AG04450 (cell line): ENCODE measurements at regions of chr22 and their contacts with region 1.

Region 1: DNA sequence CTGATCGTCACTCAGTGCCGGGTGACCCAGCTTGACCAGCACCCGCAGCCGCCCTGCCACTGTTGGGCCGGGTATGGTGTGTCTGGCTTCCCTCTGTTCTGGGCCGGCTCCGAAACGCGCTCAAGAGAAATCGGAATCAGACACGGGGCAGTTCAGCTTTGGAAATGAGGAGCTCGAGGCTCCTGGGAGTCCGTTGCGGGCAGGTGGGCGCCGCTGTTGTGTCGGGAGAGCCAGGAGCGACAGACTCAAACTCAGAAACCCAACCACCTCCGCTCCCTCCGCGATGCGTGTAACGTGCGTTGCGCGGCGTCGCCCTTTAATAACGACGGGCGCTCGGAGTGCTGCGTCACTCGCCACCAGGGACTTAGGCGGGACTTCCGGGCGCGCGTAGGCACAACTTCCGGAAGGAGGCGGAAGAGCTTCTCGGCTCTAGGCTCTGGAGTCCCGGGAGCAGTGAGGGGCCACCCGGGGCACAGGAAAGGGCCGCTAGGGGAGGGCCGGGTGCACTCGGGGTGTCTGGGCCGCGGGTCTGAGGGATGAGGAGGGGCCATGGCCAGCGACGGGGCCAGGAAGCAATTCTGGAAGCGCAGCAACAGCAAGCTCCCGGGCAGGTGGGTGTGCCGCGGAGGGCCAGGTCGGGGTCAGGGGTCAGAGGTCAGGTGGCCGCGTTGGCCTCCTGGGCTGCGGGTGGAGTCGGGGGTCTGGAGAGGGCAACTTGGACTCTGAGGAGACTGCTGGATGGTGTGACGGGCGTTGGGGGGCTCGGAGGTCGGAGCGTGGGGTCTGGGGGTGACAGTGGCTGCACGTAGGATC is at the start of gene TBC1D22A:
- DNase-seq: peak; percentile 80
- H3K4me3 ChIP-seq: peak within 1 kb of the TSS; percentile 100
- H3K27ac ChIP-seq: peak within 1 kb of the TSS; percentile 81
- H3K27me3 ChIP-seq: no peaks in the 10 kb centered on the region
- CTCF ChIP-seq: no peak
- polyA plus RNA-seq, gene TBC1D22A: 19.8 and 21.6 TPM in 2 replicates

Region 2: GRCh38 chr22:46693634-46694415 is 68.6 kb before region 1 on chr22:
- CTCF ChIA-PET with region 1: no interaction called
- POLR2A ChIA-PET with region 1: no interaction called
- DNase-seq: no peak
- H3K4me3 ChIP-seq: no peak overlapping the region
- H3K27ac ChIP-seq: no peak overlapping the region
- H3K27me3 ChIP-seq: no peaks in the 10 kb centered on the region
- CTCF ChIP-seq: no peak

Region 3: DNA sequence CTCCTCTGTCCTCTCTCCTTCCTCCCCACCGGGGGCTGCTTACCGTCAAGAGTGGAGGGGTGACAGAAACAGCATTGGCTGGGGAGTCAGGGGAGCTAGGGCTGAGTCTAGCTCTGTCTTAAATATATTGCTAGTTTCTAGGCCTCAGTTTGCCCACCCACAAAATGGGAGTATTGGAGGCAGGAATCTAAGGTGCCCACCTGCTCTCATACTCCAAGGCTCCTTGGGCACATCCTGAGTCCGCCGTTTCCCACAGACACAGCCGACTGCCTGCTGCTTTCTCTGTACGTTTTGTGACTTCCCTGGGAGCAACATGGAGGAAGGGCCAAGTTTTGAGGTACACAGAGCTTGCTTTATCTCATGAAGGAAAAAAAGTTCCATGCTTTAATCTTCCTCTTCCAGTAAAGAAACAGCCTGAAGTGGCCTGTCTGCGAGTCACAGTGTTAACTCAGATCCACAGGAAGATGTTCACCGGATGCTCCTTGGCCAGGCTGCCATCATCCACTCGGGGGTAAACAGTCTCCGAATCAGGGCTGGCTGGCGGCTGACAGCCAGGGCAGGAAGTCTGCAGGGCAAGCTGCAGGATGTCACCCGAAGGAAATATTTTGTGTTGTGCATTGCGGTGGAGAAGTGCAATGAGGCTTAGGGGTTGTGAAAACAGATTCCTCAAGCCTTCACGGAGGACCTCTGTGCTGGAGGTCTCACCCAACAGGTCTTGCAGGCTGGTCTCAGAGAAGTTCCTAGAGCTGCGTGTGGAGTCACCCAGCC is 13.4 kb before region 1 on chr22:
- CTCF ChIA-PET with region 1: interaction called, 12 read pairs
- POLR2A ChIA-PET with region 1: interaction called, 9 read pairs
- DNase-seq: no peak
- H3K4me3 ChIP-seq: no peak overlapping the region
- H3K27ac ChIP-seq: peak overlapping the region; percentile 47
- H3K27me3 ChIP-seq: peaks cover 2% of the 10 kb centered on the region
- CTCF ChIP-seq: no peak

Region 4: DNA sequence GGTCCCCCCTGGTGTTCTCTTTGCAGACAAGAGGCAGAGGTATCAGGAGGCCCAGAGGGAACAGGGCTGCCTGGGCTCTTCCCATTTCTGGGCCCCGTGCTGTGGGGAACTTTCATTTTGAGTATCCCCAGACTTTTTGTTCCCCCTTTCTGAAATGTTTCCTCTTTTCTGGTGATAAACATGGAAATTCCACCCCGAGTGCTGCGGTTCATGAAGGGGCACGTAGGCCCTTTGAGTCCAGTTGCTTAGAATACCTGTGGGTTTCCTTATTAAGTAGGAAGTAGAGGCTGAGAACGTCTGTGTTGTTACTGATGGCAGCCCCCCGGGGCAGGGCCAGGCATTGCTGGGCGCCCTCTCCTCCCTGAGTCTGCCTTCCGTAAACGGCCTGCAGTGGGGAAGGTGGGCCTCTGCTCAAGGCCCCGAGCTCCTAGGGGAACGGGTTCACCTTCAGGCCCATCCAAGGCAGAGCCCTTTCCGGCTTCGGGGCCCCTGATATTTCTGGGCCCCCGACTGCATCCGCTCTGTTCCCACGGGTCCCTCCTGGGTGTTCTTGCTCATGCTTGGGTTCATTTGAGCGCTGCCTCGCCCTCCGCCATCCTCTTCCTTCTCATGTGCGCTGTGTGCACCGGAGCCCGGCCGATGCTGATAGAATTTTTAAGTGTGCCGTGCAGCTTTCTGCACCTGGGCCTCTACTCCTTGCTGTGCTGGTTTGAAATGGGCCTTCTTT is 12.0 kb after region 1 on chr22:
- CTCF ChIA-PET with region 1: interaction called, 8 read pairs
- POLR2A ChIA-PET with region 1: interaction called, 10 read pairs
- DNase-seq: no peak
- H3K4me3 ChIP-seq: no peak overlapping the region
- H3K27ac ChIP-seq: peak overlapping the region; percentile 87
- H3K27me3 ChIP-seq: no peaks in the 10 kb centered on the region
- CTCF ChIP-seq: no peak

Region 5: GRCh38 chr22:46881373-46882118 is 119.1 kb after region 1 on chr22:
- CTCF ChIA-PET with region 1: no interaction called
- POLR2A ChIA-PET with region 1: no interaction called
- DNase-seq: no peak
- H3K4me3 ChIP-seq: no peak overlapping the region
- H3K27ac ChIP-seq: no peak overlapping the region
- H3K27me3 ChIP-seq: no peaks in the 10 kb centered on the region
- CTCF ChIP-seq: no peak

Region 6: GRCh38 chr22:46931414-46931813 is 169.0 kb after region 1 on chr22:
- CTCF ChIA-PET with region 1: no interaction called
- POLR2A ChIA-PET with region 1: no interaction called
- DNase-seq: no peak
- H3K4me3 ChIP-seq: no peak overlapping the region
- H3K27ac ChIP-seq: no peak overlapping the region
- H3K27me3 ChIP-seq: no peaks in the 10 kb centered on the region
- CTCF ChIP-seq: peak; percentile 1; the same call in 1 of the 2 replicates